ENCODE measurements at regions of chr5 and their contacts with region 1.

Region 1: GRCh38 chr5:36414869-36415282 is 113.2 kb upstream of the RANBP3L start:
- DNase-seq: no peak
- ATAC-seq: no peak
- H3K4me3 ChIP-seq: no peak overlapping the region
- H3K27ac ChIP-seq: no peak overlapping the region
- H3K4me1 ChIP-seq: no peaks in the 10 kb centered on the region
- H3K27me3 ChIP-seq: no peaks in the 10 kb centered on the region

Region 2: DNA sequence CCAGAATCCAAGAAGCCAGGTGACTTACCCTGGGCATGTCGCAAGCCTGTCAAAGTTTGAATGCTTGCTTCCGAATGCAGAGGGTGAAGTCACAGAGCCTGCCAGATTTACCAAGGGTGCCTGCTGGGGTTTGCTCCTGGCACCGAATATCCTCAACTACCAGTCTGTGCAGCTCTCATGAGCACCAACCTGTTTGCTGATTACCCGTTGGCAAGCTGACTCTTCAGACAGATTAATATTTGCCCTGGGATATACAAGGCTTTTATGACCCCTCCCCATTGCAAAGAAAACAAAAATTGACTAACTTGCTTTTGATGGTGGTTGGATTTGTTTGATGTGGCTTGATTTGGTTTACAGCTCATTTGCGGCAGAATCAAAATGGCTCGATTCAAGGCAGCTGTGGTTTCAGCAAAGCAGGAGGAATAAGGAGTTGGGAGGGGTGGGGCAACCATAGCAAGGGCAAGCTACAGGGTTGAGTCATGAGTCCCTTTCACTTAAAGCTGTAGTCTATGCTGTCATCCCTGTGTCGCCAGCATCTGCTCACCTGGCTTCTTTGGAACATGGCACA is 1284.9 kb before region 1 on chr5:
- intact Hi-C with region 1: no loop called
- DNase-seq: no peak
- ATAC-seq: no peak
- H3K4me3 ChIP-seq: no peak overlapping the region
- H3K27ac ChIP-seq: no peak overlapping the region
- H3K4me1 ChIP-seq: peaks cover 0 to 1% of the 10 kb centered on the region in 2 donors
- H3K27me3 ChIP-seq: peaks cover 0 to 2% of the 10 kb centered on the region in 2 donors

Region 3: GRCh38 chr5:36214434-36214833 is 200.4 kb before region 1 on chr5:
- intact Hi-C with region 1: no loop called
- DNase-seq: no peak
- ATAC-seq: no peak
- H3K4me3 ChIP-seq: no peak overlapping the region
- H3K27ac ChIP-seq: no peak overlapping the region
- H3K4me1 ChIP-seq: no peaks in the 10 kb centered on the region
- H3K27me3 ChIP-seq: no peaks in the 10 kb centered on the region

Region 4: DNA sequence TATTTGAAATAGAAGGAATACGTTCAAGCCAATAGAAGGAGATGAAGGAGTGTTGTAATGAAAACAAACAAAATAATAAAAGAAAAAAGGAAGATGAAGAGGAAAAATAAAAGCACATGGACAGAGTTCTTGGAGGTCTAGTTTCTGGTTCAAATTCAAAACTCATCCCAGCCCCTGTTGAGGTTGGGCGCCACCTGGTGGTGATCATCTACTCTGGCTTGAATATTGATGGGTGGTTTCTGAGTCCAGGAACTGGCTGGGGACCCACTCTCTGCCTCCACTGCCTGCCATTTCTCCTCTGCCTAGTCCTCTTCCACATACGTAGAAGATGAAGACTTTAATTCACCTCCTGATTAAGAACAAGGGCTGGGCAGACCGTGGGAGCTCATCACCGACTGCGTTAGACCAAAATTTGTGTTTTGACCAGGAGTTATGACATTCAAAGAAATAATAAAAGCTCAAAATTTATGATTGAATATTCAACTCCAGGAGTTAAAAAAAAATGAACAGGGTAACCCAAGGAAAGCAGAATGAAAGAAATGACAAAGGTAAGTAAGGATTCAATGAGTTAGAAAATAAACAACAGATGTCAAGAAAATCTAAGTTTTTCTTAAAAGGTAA is 92.6 kb after region 1 on chr5:
- intact Hi-C with region 1: loop called (anchors 2 to 5 kb)
- DNase-seq: peak; percentile 89 to 92
- ATAC-seq: peak; percentile 80
- H3K4me3 ChIP-seq: no peak overlapping the region
- H3K27ac ChIP-seq: no peak overlapping the region
- H3K4me1 ChIP-seq: no peaks in the 10 kb centered on the region
- H3K27me3 ChIP-seq: no peaks in the 10 kb centered on the region

Measured in aorta (tissue), 5 donors.